Posterior vena cava (tissue), 2 donors: ENCODE measurements at regions of chr15 and their contacts with region 1.

Region 1: DNA sequence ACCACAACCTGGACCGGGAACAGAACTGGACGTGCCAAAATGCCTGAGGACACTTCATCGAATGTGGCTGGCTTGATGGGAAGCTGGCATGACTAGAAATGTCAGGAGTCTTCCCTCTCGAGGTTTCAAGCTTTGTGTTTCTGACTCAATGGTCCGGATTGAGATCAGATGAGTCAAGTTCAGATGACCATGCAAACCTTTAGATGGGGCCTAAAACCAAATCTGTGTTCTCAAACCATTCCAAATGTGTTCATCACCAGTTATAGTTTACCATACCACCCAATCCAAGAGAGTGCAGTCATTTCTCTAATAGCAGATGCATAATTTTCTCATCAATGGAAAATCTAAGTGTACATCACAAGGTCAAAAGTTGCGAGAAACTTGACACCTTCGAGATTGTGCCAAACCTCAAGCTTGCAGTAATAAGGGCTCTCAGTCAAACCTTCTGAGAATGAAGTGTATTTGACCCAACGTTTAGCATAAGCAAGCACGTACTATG is 369.1 kb downstream of the RORA start:
- DNase-seq: no peak

Region 2: GRCh38 chr15:60883691-60884640 is 23.9 kb after region 1 on chr15:
- intact Hi-C with region 1: loop called in 1 of 2 experiments (anchors 2 kb)
- DNase-seq: no peak

Region 3: GRCh38 chr15:61175024-61175423 is 315.0 kb after region 1 on chr15:
- intact Hi-C with region 1: no loop called
- DNase-seq: no peak